Ascending aorta (tissue), 2 donors: ENCODE measurements at regions of chr7 and their contacts with region 1.

Region 1: DNA sequence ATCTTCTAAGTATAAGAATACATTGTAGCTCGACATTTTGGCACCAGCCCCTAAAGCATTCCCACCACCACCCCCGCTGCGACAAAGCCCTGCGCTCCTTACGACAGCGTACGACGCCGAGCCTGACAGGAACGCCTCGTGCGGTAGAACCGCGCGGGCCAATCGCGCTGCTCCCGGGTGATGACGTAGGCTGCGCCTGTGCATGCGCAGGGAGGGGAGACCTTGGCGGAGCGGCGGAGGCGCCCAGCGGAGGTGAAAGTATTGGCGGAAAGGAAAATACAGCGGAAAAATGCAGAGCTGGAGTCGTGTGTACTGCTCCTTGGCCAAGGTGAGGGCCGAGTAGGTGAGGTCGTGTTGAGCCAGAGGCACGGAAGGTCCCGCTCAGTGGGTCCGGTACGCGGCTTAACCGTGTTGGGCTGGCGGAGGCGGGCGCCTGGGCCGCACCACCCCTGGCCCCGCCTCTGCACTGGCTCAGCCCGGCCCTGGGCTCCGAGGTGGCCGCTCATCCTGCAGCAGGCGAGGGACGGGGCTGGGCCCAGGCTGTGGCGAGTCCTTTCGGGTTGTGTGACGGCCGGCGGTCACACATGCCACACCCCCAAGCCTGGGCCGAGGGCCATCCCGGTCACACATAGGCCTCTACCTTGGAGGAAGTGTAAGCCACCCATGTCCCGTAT is at the start of gene DLD:
- DNase-seq: peak; percentile 78 to 97
- H3K4me3 ChIP-seq: peak within 1 kb of the TSS; percentile 83 to 85
- H3K27ac ChIP-seq: peak within 1 kb of the TSS; percentile 95
- H3K4me1 ChIP-seq: peaks cover 3 to 17% of the 10 kb centered on the region in 2 donors
- H3K27me3 ChIP-seq: no peaks in the 10 kb centered on the region
- CTCF ChIP-seq: no peak
- total RNA-seq, gene DLD: 19.2 TPM

Region 2: GRCh38 chr7:107579885-107580715 is 311.0 kb before region 1 on chr7 and contains the start of gene BCAP29:
- intact Hi-C with region 1: loop called (anchors 10 kb)
- DNase-seq: peak; percentile 19 to 89
- H3K4me3 ChIP-seq: peak within 1 kb of the TSS; percentile 84 to 91
- H3K27ac ChIP-seq: peak within 1 kb of the TSS; percentile 93 to 97
- H3K4me1 ChIP-seq: peaks cover 0 to 11% of the 10 kb centered on the region in 2 donors
- H3K27me3 ChIP-seq: no peaks in the 10 kb centered on the region
- CTCF ChIP-seq: peak; percentile 22 to 50 (median 29)
- total RNA-seq, gene BCAP29: 73.2 TPM

Region 3: DNA sequence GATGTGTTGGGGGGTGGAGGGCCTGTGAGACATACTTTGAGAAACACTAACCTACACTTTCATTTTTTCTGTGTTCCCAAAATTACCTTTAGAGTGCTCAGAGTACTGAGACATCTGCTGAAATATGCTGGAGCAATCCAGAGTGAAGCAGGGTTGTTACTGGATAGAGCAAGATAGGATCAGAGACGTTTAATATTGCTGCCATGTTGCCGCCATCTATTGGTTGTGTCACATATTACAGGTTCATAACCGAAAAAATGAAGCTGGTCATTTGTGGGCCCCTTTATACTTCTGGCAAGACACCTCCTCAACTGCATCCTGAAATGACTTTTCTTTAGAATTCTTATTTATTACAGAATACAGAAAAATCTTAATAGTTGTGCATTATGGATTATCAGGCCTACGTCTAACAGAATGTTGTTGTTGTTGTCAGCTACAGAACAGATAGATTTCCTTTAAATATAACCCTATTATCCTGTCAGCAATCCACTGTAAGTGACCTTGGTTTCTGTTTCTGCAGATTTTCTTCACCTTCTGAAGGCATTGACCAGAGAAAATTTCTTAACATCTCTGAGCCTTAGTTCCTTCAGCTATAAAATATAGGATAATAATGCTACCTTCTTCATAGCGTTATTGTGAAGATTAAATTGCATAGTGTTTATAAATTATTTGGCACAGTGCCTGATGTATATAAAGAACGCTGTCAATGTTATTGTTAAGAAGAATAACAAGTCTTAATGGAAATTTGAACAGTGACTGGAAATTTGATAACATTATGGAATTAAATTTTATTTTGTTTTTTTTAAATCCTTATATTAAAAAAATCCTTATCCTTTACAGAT is 16.3 kb before region 1 on chr7:
- intact Hi-C with region 1: no loop called
- DNase-seq: no peak
- H3K4me3 ChIP-seq: no peak overlapping the region
- H3K27ac ChIP-seq: no peak overlapping the region
- H3K4me1 ChIP-seq: no peaks in the 10 kb centered on the region
- H3K27me3 ChIP-seq: no peaks in the 10 kb centered on the region
- CTCF ChIP-seq: peak; percentile 40 to 64 (median 63)

Region 4: DNA sequence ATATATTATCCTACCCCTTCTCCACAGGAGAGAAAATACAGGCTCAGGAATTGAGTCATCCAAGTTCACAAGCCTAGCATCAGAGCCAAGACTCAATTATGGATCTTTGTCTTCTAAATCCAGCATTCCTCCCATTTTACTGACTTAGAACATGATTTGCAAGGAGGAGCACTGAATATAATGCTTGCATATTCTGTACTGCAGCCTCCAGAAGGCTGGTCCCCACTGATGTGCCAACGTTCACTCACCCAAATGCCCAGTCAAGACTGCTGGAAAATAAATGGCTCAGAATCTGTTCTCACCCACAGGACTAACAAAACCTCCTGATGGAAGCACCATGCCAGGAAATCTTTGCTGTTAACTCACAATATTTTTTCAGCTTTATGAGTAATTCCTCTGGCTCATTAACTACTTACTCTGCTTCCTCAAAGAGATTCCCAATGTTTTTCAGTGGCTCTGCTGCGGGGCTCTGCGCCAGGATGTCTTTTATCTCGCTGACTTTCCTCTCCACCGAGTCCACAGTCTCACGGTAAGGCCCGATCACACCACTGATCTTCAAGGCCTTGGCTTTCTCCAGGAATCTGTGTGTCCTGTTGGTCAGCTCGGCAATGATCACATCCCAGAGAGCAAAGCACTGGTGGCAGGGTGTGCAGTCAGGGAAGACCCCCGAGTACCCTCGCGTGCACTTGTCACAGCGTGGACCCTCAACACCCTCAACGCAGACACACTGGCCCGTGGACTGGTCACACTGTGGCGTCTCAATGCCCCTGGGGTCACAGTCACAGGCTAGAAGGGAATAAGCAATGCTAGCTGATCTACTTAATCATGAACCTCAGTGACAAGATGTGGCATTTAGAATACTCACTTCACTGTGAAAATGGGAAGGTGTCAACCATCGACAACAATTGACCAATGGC is 48.7 kb after region 1 on chr7:
- intact Hi-C with region 1: loop called (anchors 2 kb)
- DNase-seq: peak in 1 of 2 donors; percentile 88
- H3K4me3 ChIP-seq: no peak overlapping the region
- H3K27ac ChIP-seq: peak overlapping the region; percentile 85 to 88
- H3K4me1 ChIP-seq: peaks cover 13 to 22% of the 10 kb centered on the region in 2 donors
- H3K27me3 ChIP-seq: no peaks in the 10 kb centered on the region
- CTCF ChIP-seq: no peak

Region 5: GRCh38 chr7:108002726-108003598 is 111.9 kb after region 1 on chr7 and contains the start of gene LAMB1:
- intact Hi-C with region 1: loop called (anchors 5 kb)
- DNase-seq: peak in 1 of 2 donors; percentile 80
- H3K4me3 ChIP-seq: peak within 1 kb of the TSS; percentile 64 to 89
- H3K27ac ChIP-seq: peak within 1 kb of the TSS; percentile 81 to 85
- H3K4me1 ChIP-seq: peaks cover 0 to 17% of the 10 kb centered on the region in 2 donors
- H3K27me3 ChIP-seq: no peaks in the 10 kb centered on the region
- CTCF ChIP-seq: no peak
- total RNA-seq, gene LAMB1: 198 TPM

Region 6: GRCh38 chr7:108014747-108015682 is 123.9 kb after region 1 on chr7:
- intact Hi-C with region 1: no loop called
- DNase-seq: no peak
- H3K4me3 ChIP-seq: no peak overlapping the region
- H3K27ac ChIP-seq: no peak overlapping the region
- H3K4me1 ChIP-seq: no peaks in the 10 kb centered on the region
- H3K27me3 ChIP-seq: no peaks in the 10 kb centered on the region
- CTCF ChIP-seq: no peak

Region 7: DNA sequence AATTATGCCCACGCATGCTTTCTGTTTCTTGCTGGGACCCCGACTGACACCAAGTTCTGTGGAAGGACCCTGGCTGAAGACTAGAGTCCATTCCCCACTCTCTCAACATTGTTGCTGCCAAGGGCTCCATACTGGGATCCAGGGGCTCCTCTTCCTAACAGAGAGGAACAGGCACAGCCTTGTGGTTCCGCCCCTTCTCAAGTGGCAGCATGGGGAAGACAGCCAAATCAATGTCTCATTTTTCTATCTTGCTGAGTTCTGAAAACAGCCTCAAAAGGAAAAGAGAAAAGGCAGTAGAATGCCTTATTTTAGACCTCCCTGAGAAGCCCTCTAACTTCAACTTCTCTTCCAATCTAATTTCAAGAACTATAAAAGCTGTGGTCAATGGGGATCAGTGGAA is 135.5 kb after region 1 on chr7:
- intact Hi-C with region 1: loop called (anchors 5 kb)
- DNase-seq: no peak
- H3K4me3 ChIP-seq: no peak overlapping the region
- H3K27ac ChIP-seq: peak overlapping the region; percentile 62 to 63
- H3K4me1 ChIP-seq: peaks cover 0 to 19% of the 10 kb centered on the region in 2 donors
- H3K27me3 ChIP-seq: no peaks in the 10 kb centered on the region
- CTCF ChIP-seq: no peak

Region 8: GRCh38 chr7:108181073-108181985 is 290.2 kb after region 1 on chr7:
- intact Hi-C with region 1: no loop called
- DNase-seq: no peak
- H3K4me3 ChIP-seq: no peak overlapping the region
- H3K27ac ChIP-seq: no peak overlapping the region
- H3K4me1 ChIP-seq: no peaks in the 10 kb centered on the region
- H3K27me3 ChIP-seq: no peaks in the 10 kb centered on the region
- CTCF ChIP-seq: peak; percentile 17 to 70 (median 65)

Region 9: DNA sequence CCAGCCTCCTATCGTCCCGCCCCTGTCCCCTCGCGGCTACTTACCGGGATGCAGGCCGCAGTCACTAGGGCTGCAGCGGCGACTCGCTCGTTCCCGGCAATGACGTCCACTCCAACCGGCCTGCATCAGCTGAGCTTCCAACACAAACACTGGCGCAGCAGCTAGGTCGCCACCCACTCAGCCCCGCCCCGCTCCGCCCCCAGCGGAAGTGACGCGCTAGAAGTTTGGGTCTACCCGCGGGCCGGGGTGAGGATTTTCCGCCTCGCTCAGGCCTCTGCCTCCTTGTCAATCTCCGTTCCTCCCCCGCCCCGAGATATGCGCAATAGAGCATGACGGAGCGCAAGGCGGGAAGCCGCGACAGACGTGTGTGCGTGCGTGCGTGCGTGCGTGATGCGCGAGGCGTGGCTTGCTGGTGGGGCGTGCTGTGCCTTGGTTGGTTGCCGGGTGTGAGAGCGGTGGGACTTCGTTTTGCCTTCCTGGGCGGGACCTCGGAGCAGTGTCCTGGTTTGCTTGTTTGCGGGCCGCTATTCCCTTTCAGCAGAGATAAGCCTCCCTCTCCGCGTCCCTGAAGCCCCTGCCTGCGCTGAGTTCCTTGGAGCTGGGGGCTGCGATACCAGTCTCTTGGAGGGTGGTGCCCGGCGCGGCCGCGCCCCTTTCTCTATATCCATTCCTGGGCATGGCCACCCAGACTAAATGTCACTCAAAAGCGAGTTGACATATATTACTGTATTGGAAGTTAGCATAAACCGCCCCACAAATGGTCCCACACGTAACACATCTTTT is 635.1 kb after region 1 on chr7 and contains the start of gene PNPLA8:
- intact Hi-C with region 1: loop called (anchors 2 kb)
- DNase-seq: peak; percentile 99 to 100
- H3K4me3 ChIP-seq: peak within 1 kb of the TSS; percentile 68 to 88
- H3K27ac ChIP-seq: peak within 1 kb of the TSS; percentile 98 to 99
- H3K4me1 ChIP-seq: peaks cover 0 to 15% of the 10 kb centered on the region in 2 donors
- H3K27me3 ChIP-seq: no peaks in the 10 kb centered on the region
- CTCF ChIP-seq: peak in 1 of 3 experiments; percentile 11
- total RNA-seq, gene PNPLA8: 4.4 TPM